ENCODE measurements at regions of chr19 and their contacts with region 1.

Region 1: DNA sequence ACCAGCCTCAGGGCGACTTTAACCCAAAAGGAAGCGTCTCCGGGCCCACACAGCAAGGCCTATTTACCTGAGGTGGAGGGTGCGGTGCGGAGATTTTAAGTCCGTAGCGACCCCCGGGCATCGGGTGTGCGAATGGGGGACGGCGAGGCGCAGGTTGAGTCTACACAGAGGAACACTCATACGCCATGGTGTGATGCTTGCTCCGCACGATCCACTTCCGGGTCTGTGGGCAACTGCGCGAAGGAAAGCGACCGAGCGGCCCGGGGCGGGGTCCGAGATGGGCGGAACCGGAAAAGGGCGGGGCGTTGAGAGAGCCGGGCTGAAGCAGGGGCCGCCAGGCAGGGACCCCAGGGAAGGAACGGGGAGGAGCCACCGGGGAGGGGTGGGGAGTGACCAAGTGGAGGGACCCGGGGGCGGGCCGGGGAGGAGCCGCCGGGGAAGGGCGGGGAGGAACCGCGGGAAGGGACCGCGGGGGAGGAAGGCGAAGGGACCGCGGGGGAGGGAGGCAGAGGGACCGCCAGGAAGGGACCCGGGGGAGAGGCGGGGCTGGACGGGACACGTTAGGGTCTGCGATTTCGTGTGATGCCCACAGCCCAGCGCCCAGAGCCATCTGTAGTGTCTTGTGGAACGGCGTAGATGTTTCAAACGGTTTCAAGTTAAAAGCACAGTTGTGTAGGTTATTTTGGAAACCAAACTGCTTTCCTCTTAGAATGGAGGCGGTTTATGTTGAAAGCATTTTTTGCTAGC is at the start of gene ZNF160:
- DNase-seq: peak; percentile 98
- H3K4me3 Mint-ChIP-seq: peak within 1 kb of the TSS; percentile 92
- H3K27ac Mint-ChIP-seq: peak within 1 kb of the TSS; percentile 95
- H3K4me1 Mint-ChIP-seq: peaks cover 23% of the 10 kb centered on the region
- H3K27me3 Mint-ChIP-seq: no peaks in the 10 kb centered on the region
- total RNA-seq, gene ZNF160: 26.0 and 27.8 TPM in 2 replicates

Region 2: GRCh38 chr19:52527134-52527955 is 576.0 kb before region 1 on chr19 and contains the start of gene ZNF808:
- intact Hi-C with region 1: loop called (anchors 2 kb)
- DNase-seq: peak; percentile 87
- H3K4me3 Mint-ChIP-seq: peak within 1 kb of the TSS; percentile 99
- H3K27ac Mint-ChIP-seq: peak within 1 kb of the TSS; percentile 98
- H3K4me1 Mint-ChIP-seq: peaks cover 12% of the 10 kb centered on the region
- H3K27me3 Mint-ChIP-seq: no peaks in the 10 kb centered on the region
- total RNA-seq, gene ZNF808: 19.1 and 20.0 TPM in 2 replicates

Region 3: GRCh38 chr19:52786457-52787359 is 316.7 kb before region 1 on chr19 and contains the start of gene ZNF600:
- intact Hi-C with region 1: loop called (anchors 2 kb)
- DNase-seq: peak; percentile 52
- H3K4me3 Mint-ChIP-seq: peak within 1 kb of the TSS; percentile 90
- H3K27ac Mint-ChIP-seq: peak within 1 kb of the TSS; percentile 75
- H3K4me1 Mint-ChIP-seq: peaks cover 26% of the 10 kb centered on the region
- H3K27me3 Mint-ChIP-seq: no peaks in the 10 kb centered on the region
- total RNA-seq, gene ZNF600: 11.9 and 13.4 TPM in 2 replicates

Region 4: GRCh38 chr19:52922841-52923777 is 180.3 kb before region 1 on chr19 and contains the start of gene ZNF888:
- intact Hi-C with region 1: loop called (anchors 2 kb)
- DNase-seq: peak; percentile 77
- H3K4me3 Mint-ChIP-seq: peak within 1 kb of the TSS; percentile 93
- H3K27ac Mint-ChIP-seq: peak within 1 kb of the TSS; percentile 96
- H3K4me1 Mint-ChIP-seq: peaks cover 31% of the 10 kb centered on the region
- H3K27me3 Mint-ChIP-seq: no peaks in the 10 kb centered on the region
- total RNA-seq, gene ZNF888: 4.2 and 4.6 TPM in 2 replicates

Region 5: DNA sequence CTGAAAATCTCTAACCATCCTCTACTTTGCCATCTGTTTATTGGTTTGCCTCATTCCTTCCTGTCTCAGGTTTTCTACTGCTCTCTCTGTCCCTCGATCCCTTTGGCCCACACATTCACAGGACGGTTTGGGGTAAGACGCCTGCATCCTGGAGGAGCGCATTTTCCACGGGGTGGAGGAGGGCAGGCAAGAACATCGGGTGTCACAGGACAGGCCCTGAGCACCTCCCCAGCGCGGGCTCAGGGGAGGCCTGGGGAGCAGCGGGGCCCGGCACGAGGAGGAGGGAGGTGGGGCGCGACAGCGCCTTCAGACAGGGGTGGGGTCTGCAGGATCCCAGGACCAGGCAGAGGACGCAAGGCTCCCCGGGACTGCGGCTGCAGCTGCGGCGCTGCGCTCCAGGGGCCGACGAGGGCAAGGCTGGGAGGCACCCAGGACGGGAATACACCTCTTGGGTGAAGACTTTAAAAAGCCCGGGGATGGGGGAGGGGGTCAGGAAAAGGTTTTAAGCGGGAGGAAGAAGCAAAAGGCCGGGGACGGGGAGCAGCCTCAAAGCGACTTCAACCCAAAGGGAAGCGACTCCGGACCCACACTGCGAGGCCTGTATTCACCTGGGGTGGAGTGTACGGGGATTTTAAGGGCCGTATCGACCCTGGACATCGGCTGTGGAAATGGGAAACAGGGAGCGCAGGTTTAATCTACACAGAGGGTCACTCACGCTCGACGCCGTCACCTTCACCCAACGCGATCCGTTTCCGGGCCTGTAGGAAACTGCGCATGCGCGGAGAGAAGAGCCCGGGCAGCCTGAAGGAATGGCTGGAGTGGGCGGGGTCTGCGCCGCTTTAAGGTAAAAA is 29.0 kb after region 1 on chr19 and contains the start of gene ZNF415:
- intact Hi-C with region 1: loop called (anchors 2 kb)
- DNase-seq: peak; percentile 21
- H3K4me3 Mint-ChIP-seq: peak within 1 kb of the TSS; percentile 58
- H3K27ac Mint-ChIP-seq: no peak within 1 kb of the TSS
- H3K4me1 Mint-ChIP-seq: peaks cover 7% of the 10 kb centered on the region
- H3K27me3 Mint-ChIP-seq: no peaks in the 10 kb centered on the region
- total RNA-seq, gene ZNF415: 0.20 and 0.21 TPM in 2 replicates

Region 6: GRCh38 chr19:53365134-53365898 is 261.9 kb after region 1 on chr19 and contains the start of gene ZNF525:
- intact Hi-C with region 1: loop called (anchors 1 kb)
- DNase-seq: peak; percentile 93
- H3K4me3 Mint-ChIP-seq: peak within 1 kb of the TSS; percentile 93
- H3K27ac Mint-ChIP-seq: peak within 1 kb of the TSS; percentile 91
- H3K4me1 Mint-ChIP-seq: peaks cover 17% of the 10 kb centered on the region
- H3K27me3 Mint-ChIP-seq: no peaks in the 10 kb centered on the region
- total RNA-seq, gene ZNF525: 16.5 and 19.0 TPM in 2 replicates

Measured in activated T-helper 1 cell treated with anti-CD3 and anti-CD28 coated beads, Interleukin-12 subunit alpha, Interleukin-12 subunit beta, Interleukin-2, Interleukin-4 antibody, amounts not matched to agents 30 ng/mL and 10 ng/mL and 1 ng/mL, durations not matched to agents 14 hours and 24 hours and 36 hours (primary cell).